ENCODE measurements at regions of chr2 and their contacts with region 1.

Region 1: DNA sequence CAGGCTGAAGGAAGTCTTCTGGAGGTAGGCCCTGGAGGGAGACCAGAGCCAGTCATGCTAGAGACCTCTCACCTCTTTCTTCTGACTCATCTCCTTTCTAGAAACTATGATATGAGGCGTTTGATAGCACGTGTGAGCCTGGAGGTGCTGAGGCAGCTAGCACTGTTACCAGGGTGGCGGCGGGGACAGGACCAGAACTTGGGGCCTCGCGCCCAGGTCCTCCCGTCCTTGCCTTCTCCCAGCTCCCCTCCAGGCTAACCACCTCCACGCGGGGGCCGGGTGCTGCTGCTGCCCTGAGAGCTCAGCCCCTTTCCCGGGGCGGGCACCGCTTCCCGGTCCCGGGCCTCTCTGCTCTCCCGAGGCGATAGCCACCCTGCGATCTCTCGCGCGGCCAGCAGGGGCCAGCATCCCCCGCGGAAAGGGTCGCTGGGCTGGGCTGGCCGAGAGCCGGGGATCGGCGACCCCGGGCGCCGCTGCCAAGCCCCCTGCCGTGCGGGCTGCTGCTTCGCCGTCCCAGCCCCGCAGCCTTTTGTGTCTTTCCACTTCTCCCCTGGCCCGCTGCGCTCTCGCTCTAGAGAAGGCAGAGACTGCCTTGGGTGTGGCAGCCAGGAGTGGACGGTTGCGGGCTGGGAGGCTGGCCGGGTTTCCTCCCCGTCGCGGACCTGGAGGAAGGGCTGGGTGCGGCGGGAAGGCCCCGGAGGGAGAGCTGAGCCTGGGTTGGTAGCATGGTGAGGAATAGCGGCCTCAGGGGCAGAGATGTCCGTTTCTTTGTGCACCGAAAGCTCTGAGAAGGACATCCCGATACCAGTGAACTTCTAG is 49.1 kb downstream of the TMEM17 start:
- DNase-seq: peak; percentile 31 to 77 (median 60)
- ATAC-seq: peak; percentile 82
- H3K4me3 ChIP-seq: peak overlapping the region; percentile 58
- H3K4me3 Mint-ChIP-seq: peak overlapping the region; percentile 39 to 69 (median 56)
- H3K27ac ChIP-seq: no peak overlapping the region
- H3K27ac Mint-ChIP-seq: no peak overlapping the region
- H3K4me1 ChIP-seq: no peaks in the 10 kb centered on the region
- H3K4me1 Mint-ChIP-seq: no peaks in the 10 kb centered on the region
- H3K27me3 ChIP-seq: no peaks in the 10 kb centered on the region
- H3K27me3 Mint-ChIP-seq: peaks cover 3 to 10% (median 8%) of the 10 kb centered on the region in 5 donors

Region 2: GRCh38 chr2:62774555-62775366 is 317.8 kb after region 1 on chr2:
- CTCF ChIA-PET with region 1: interaction called, 95 read pairs
- POLR2A ChIA-PET with region 1: no interaction called
- intact Hi-C with region 1: loop called (anchors 1 kb)
- DNase-seq: peak in 5 of 9 donors; percentile 16 to 43 (median 33)
- ATAC-seq: peak; percentile 73
- H3K4me3 ChIP-seq: no peak overlapping the region
- H3K4me3 Mint-ChIP-seq: no peak overlapping the region
- H3K27ac ChIP-seq: no peak overlapping the region
- H3K27ac Mint-ChIP-seq: no peak overlapping the region
- H3K4me1 ChIP-seq: no peaks in the 10 kb centered on the region
- H3K4me1 Mint-ChIP-seq: peaks cover 0 to 10% (median 8%) of the 10 kb centered on the region in 7 donors
- H3K27me3 ChIP-seq: no peaks in the 10 kb centered on the region
- H3K27me3 Mint-ChIP-seq: no peaks in the 10 kb centered on the region

Region 3: DNA sequence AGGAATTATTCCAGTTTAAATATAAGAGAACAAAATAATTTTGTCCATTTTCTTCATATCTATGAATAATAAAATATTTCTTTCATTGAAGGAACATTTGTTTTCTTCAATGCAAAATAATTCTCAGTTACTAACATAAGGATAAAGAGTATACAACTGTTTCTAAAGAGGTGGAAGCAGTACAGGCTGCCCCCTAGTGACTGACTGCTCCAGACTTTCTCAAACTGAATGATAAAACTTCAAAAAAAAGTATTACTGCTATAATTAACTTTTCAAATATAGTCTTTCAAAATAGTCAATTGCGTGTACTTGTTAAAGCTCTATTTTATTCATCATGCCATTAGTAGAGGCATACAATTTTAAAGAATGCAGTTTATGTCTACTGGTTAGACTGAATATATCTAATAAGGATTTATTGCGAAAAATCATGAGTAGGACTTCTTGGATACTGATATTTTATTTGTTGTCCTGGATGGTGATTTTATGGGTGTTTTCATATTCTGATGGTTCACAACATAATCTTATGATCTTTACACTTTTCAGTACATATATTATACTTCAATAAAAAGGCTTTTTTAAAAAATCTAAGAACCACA is 1031.3 kb after region 1 on chr2:
- CTCF ChIA-PET with region 1: no interaction called
- POLR2A ChIA-PET with region 1: no interaction called
- intact Hi-C with region 1: loop called in 1 of 2 experiments (anchors 1 kb)
- DNase-seq: no peak
- ATAC-seq: no peak
- H3K4me3 ChIP-seq: no peak overlapping the region
- H3K4me3 Mint-ChIP-seq: no peak overlapping the region
- H3K27ac ChIP-seq: no peak overlapping the region
- H3K27ac Mint-ChIP-seq: no peak overlapping the region
- H3K4me1 ChIP-seq: no peaks in the 10 kb centered on the region
- H3K4me1 Mint-ChIP-seq: peaks cover 0 to 3% (median 0%) of the 10 kb centered on the region in 7 donors
- H3K27me3 ChIP-seq: no peaks in the 10 kb centered on the region
- H3K27me3 Mint-ChIP-seq: no peaks in the 10 kb centered on the region

Region 4: GRCh38 chr2:63544017-63544627 is 1087.2 kb after region 1 on chr2:
- CTCF ChIA-PET with region 1: interaction called, 3 read pairs
- POLR2A ChIA-PET with region 1: no interaction called
- intact Hi-C with region 1: loop called in 1 of 2 experiments (anchors 1 kb)
- DNase-seq: peak in 1 of 9 donors; percentile 7
- ATAC-seq: no peak
- H3K4me3 ChIP-seq: no peak overlapping the region
- H3K4me3 Mint-ChIP-seq: no peak overlapping the region
- H3K27ac ChIP-seq: no peak overlapping the region
- H3K27ac Mint-ChIP-seq: peak overlapping the region in 1 of 9 donors; percentile 21
- H3K4me1 ChIP-seq: no peaks in the 10 kb centered on the region
- H3K4me1 Mint-ChIP-seq: peaks cover 0 to 4% (median 0%) of the 10 kb centered on the region in 7 donors
- H3K27me3 ChIP-seq: no peaks in the 10 kb centered on the region
- H3K27me3 Mint-ChIP-seq: no peaks in the 10 kb centered on the region

Measured in naive thymus-derived CD4-positive, alpha-beta T cell (primary cell).